ENCODE measurements at regions of chr4 and their contacts with region 1.

Region 1: DNA sequence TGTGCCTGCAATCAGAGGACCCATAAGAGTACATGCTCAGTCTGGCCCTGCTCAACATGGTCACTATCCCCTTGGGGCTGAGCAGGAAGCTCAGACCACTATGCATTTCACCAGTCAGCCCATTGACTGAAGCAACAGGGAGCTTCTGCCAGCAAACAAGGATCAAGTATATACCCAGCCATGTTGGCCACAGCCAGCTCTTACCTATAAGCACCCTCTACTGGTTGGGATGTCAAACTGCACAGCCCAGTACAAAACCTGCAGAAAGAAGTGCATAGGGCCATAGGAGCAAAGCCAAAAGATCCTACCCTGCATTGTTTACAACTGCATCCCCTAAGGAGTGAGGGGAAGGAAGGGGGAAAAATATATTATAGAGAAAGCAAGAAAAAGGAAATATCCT is 214.4 kb upstream of the CPEB2 start:
- DNase-seq: no peak
- H3K4me3 ChIP-seq: no peak overlapping the region
- H3K27ac ChIP-seq: no peak overlapping the region
- H3K4me1 ChIP-seq: no peaks in the 10 kb centered on the region
- H3K27me3 ChIP-seq: no peaks in the 10 kb centered on the region
- CTCF ChIP-seq: peak; percentile 30

Region 2: GRCh38 chr4:13654158-13654797 is 1133.6 kb before region 1 on chr4:
- intact Hi-C with region 1: loop called (anchors 10 kb)
- DNase-seq: peak; percentile 83
- H3K4me3 ChIP-seq: peak overlapping the region; percentile 62
- H3K27ac ChIP-seq: no peak overlapping the region
- H3K4me1 ChIP-seq: no peaks in the 10 kb centered on the region
- H3K27me3 ChIP-seq: no peaks in the 10 kb centered on the region
- CTCF ChIP-seq: peak; percentile 92

Region 3: GRCh38 chr4:14952352-14952751 is 164.5 kb after region 1 on chr4:
- intact Hi-C with region 1: no loop called
- DNase-seq: no peak
- H3K4me3 ChIP-seq: no peak overlapping the region
- H3K27ac ChIP-seq: no peak overlapping the region
- H3K4me1 ChIP-seq: no peaks in the 10 kb centered on the region
- H3K27me3 ChIP-seq: no peaks in the 10 kb centered on the region
- CTCF ChIP-seq: no peak